Ascending aorta (tissue), 2 donors: ENCODE measurements at regions of chr1 and their contacts with region 1.

Region 1: DNA sequence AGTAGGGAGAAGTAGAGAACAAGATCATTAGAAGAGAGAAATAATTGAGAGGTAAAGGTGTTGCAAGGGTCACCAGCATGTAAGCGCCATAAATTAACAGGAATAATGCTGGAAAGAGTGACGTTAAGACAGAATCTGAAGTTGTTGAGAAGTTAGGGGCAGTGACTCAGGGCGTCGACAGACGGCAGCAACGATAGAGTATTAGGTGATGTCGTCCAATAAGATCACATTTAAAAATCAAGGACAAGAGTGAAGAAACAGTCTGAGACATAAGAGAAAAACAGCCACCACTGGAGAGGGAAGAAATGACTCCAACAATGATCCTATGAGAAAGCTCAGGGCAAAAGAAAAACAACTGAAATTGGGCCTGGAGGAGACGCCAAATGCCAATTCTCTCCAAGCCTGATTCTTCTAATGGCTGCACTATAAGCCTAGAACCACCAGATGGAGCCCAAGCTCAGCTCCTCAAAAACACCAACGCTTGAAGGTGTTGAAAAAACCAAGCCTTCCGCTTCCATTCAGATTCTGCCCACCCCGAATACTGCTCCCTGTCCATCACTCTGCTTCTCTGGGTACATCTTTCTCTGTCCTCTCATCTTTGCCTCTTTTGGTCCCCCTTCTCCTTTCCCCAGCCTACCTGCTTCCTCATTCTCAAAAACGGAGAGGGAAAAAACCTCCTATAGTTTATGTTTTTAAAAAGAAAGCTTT is 70.0 kb downstream of the LUZP1 start:
- DNase-seq: peak in 1 of 2 donors; percentile 79
- H3K4me3 ChIP-seq: peak overlapping the region in 1 of 2 donors; percentile 35
- H3K27ac ChIP-seq: no peak overlapping the region
- H3K4me1 ChIP-seq: peaks cover 10 to 41% of the 10 kb centered on the region in 2 donors
- H3K27me3 ChIP-seq: no peaks in the 10 kb centered on the region
- CTCF ChIP-seq: peak; percentile 85 to 95 (median 91)

Region 2: DNA sequence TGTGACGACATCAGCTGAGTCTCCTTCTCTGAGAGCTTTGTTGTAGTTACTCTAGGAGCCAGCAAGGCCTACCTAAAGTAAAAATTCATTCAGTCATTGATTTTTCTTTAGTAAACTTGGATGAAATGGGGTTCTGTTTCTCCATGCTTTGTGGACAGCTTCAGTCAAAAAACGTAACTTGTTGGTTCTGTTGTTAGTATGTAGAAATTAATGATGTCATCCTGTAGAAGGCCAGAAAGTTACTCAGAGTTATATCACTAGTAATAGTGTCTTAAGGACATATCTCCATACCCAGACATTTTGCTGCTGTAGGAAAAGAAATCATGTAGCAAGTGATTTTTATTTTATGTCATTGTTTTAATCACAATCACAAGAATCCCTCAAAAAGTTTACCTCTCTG is 36.3 kb before region 1 on chr1:
- intact Hi-C with region 1: no loop called
- DNase-seq: no peak
- H3K4me3 ChIP-seq: no peak overlapping the region
- H3K27ac ChIP-seq: no peak overlapping the region
- H3K4me1 ChIP-seq: no peaks in the 10 kb centered on the region
- H3K27me3 ChIP-seq: no peaks in the 10 kb centered on the region
- CTCF ChIP-seq: no peak

Region 3: GRCh38 chr1:23168457-23169194 is 70.0 kb after region 1 on chr1 and contains the start of gene LUZP1:
- intact Hi-C with region 1: loop called (anchors 5 kb)
- DNase-seq: peak; percentile 42 to 92
- H3K4me3 ChIP-seq: peak within 1 kb of the TSS; percentile 93 to 98
- H3K27ac ChIP-seq: peak within 1 kb of the TSS; percentile 86 to 92
- H3K4me1 ChIP-seq: peaks cover 7 to 28% of the 10 kb centered on the region in 2 donors
- H3K27me3 ChIP-seq: no peaks in the 10 kb centered on the region
- CTCF ChIP-seq: no peak
- total RNA-seq, gene LUZP1: 18.0 TPM

Region 4: GRCh38 chr1:23184212-23184934 is 85.8 kb after region 1 on chr1:
- intact Hi-C with region 1: loop called (anchors 1 kb)
- DNase-seq: no peak
- H3K4me3 ChIP-seq: peak overlapping the region; percentile 45 to 50
- H3K27ac ChIP-seq: no peak overlapping the region
- H3K4me1 ChIP-seq: peaks cover 0 to 3% of the 10 kb centered on the region in 2 donors
- H3K27me3 ChIP-seq: no peaks in the 10 kb centered on the region
- CTCF ChIP-seq: peak; percentile 64 to 94 (median 92)